Mammary epithelial cell (primary cell): ENCODE measurements at regions of chr4 and their contacts with region 1.

Region 1: GRCh38 chr4:122652379-122652778 is 31.5 kb upstream of the IL21 start:
- DNase-seq: peak; percentile 30
- H3K4me3 ChIP-seq: no peak overlapping the region
- H3K27ac ChIP-seq: no peak overlapping the region
- H3K4me1 ChIP-seq: no peaks in the 10 kb centered on the region
- H3K27me3 ChIP-seq: no peaks in the 10 kb centered on the region
- CTCF ChIP-seq: peak; percentile 70 to 71

Region 2: DNA sequence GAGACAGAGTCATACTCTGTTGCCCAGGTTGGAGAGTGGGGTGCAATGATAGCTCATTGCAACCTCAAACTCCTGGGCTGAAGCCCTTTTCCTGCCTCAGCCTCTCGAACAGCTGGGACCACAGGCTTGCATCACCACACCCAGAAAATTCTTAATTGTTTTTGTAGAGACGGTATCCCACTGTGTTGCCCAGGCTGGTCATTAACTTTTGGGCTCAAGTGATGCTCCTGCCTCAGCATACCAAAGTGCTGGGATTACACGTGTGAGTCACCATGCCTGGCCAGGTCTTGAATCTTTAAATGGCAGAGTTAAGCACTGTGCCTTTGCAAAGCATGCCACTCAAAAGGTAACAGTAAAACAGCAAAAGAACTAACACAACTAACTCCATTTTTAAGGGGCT is 51.5 kb after region 1 on chr4:
- CTCF ChIA-PET with region 1: no interaction called
- dilution Hi-C with region 1: no loop called
- in situ Hi-C with region 1: no loop called
- intact Hi-C with region 1: no loop called
- DNase-seq: no peak
- H3K4me3 ChIP-seq: no peak overlapping the region
- H3K27ac ChIP-seq: no peak overlapping the region
- H3K4me1 ChIP-seq: peaks cover 38% of the 10 kb centered on the region
- H3K27me3 ChIP-seq: no peaks in the 10 kb centered on the region
- CTCF ChIP-seq: no peak

Region 3: DNA sequence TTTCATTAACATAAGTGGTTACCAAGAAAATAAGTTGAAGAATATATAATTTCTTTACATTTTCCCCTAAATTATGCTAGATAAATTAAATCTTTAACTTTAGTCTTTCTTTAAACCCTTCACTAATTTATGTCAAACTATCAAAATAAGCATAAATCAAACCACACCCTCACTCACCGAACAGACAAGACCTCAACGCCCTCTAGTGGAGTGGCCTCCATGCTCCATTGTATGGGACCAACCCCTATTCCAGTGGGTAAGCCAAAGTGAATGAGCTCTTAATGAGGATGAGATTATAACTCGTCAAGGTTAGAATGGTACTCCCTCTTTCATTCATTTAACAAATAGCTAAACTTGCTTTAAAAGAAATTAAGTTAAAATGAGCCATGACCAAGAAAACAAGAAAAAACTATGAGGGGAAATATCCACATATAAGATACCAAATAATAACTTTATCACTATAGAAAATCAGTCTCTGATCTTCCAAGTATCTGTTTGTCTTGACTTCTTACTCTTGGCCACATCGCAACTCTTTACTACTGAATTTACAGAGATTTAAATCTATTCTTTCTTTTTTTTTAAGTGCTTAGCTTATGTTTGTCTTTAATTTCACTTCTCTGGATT is 64.6 kb after region 1 on chr4:
- CTCF ChIA-PET with region 1: no interaction called
- dilution Hi-C with region 1: no loop called
- in situ Hi-C with region 1: no loop called
- intact Hi-C with region 1: loop called (anchors 5 kb)
- DNase-seq: peak; percentile 48
- H3K4me3 ChIP-seq: no peak overlapping the region
- H3K27ac ChIP-seq: no peak overlapping the region
- H3K4me1 ChIP-seq: peaks cover 3% of the 10 kb centered on the region
- H3K27me3 ChIP-seq: no peaks in the 10 kb centered on the region
- CTCF ChIP-seq: peak; percentile 90 to 93